ENCODE measurements at regions of chr7 and their contacts with region 1.

Region 1: DNA sequence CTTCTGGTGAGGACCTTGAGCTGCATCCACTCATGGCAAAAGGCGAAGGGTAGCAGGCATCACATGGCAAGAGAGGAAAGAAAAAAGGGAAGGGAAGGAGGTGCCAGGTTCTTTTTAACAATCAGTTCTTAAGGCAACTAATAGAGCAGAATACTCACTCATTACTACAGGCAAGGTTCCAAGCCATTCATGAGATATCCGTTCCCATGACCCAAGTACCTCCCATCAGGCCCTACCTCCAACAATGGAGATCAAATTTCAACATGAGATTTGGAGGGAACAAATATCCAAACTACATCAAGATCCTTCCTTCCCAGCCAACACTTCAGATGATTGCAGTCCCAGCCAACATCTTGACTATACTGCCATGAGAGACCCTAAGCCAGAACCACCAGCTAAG is 38.9 kb upstream of the YAE1 start:
- DNase-seq: no peak

Region 2: GRCh38 chr7:38409531-38409930 is 1117.8 kb before region 1 on chr7:
- intact Hi-C with region 1: loop called (anchors 10 kb)
- DNase-seq: no peak